ENCODE measurements at regions of chr16 and their contacts with region 1.

Region 1: GRCh38 chr16:9047686-9048301 is 43.6 kb upstream of the HAPSTR1 start:
- DNase-seq: peak; percentile 24
- ATAC-seq: peak; percentile 80
- H3K4me3 Mint-ChIP-seq: no peak overlapping the region
- H3K27ac Mint-ChIP-seq: no peak overlapping the region; the same call in none of the 2 replicates
- H3K4me1 Mint-ChIP-seq: peaks cover 18% of the 10 kb centered on the region
- H3K27me3 Mint-ChIP-seq: no peaks in the 10 kb centered on the region
- CTCF ChIP-seq: no peak

Region 2: GRCh38 chr16:8740775-8741355 is 306.9 kb before region 1 on chr16:
- CTCF ChIA-PET with region 1: no interaction called
- POLR2A ChIA-PET with region 1: no interaction called
- DNase-seq: no peak
- ATAC-seq: no peak
- H3K4me3 Mint-ChIP-seq: no peak overlapping the region
- H3K27ac Mint-ChIP-seq: no peak overlapping the region
- H3K4me1 Mint-ChIP-seq: peaks cover 6% of the 10 kb centered on the region; the same call in 1 of the 2 replicates
- H3K27me3 Mint-ChIP-seq: peaks cover 5% of the 10 kb centered on the region
- CTCF ChIP-seq: no peak

Region 3: GRCh38 chr16:8963825-8964441 is 83.9 kb before region 1 on chr16 and contains the start of gene USP7:
- CTCF ChIA-PET with region 1: interaction called, 10 read pairs
- POLR2A ChIA-PET with region 1: interaction called, 3 read pairs
- DNase-seq: peak; percentile 89
- ATAC-seq: peak; percentile 73
- H3K4me3 Mint-ChIP-seq: peak within 1 kb of the TSS; percentile 90
- H3K27ac Mint-ChIP-seq: 0 out of 2 replicates have a peak within 1 kb of the TSS, but pooled peaks have one; percentile 44
- H3K4me1 Mint-ChIP-seq: peaks cover 59% of the 10 kb centered on the region
- H3K27me3 Mint-ChIP-seq: peaks cover 9% of the 10 kb centered on the region
- CTCF ChIP-seq: no peak
- total RNA-seq, gene USP7: 153 to 211 TPM (median 161 TPM) in 3 replicates

Region 4: GRCh38 chr16:9061358-9061813 is 13.6 kb after region 1 on chr16:
- CTCF ChIA-PET with region 1: interaction called, 11 read pairs
- POLR2A ChIA-PET with region 1: no interaction called
- DNase-seq: no peak
- ATAC-seq: no peak
- H3K4me3 Mint-ChIP-seq: no peak overlapping the region
- H3K27ac Mint-ChIP-seq: peak overlapping the region; percentile 55; the same call in 1 of the 2 replicates
- H3K4me1 Mint-ChIP-seq: no peaks in the 10 kb centered on the region
- H3K27me3 Mint-ChIP-seq: no peaks in the 10 kb centered on the region
- CTCF ChIP-seq: no peak

Region 5: DNA sequence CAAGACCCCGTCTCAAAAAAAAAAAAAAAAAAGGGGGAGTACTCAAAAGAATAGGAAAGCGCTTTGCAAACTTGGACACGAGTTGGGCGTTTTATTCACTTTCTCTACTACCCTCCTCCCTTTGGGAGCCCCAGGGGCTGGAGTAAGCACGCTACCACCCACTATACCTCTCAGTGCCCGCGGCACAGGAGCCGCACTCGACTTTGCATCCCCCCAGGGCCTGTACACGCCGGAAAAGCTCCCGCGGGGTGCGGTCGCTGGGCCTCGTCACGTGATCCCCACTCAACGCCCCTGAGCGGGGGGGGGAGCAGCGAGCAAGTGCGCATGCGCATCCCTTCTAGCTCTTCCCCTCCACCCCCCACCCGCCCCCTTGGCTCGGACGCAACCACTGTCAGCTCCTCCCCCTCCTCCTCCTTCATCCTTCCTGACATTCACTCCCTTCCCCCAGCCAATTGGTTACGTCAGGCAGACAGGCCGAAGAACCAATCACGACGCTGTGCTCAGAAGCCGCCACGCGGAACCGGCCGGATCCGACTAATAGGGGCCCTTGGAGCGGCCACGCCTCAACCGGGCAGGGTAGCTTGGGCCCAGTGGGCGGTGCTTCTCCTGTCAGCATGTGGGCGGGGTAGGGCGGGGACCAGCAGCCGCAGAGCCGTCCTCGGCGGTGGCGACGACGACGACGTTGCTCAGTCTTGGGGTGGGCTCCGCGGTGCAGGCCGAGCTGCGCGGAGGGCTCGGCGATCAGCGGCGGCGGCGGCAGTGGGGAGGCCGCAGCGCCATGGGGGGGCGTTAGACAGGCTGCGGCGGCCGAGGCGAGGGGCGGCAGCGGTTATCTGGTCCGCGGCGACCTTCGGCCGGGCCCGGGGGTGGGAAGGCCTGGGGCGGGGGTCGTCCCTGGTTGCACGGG is 43.4 kb after region 1 on chr16 and contains the start of gene HAPSTR1:
- CTCF ChIA-PET with region 1: interaction called, 21 read pairs
- POLR2A ChIA-PET with region 1: interaction called, 7 read pairs
- DNase-seq: peak; percentile 99
- ATAC-seq: peak; percentile 94
- H3K4me3 Mint-ChIP-seq: peak within 1 kb of the TSS; percentile 100
- H3K27ac Mint-ChIP-seq: peak within 1 kb of the TSS; percentile 92
- H3K4me1 Mint-ChIP-seq: peaks cover 35% of the 10 kb centered on the region
- H3K27me3 Mint-ChIP-seq: no peaks in the 10 kb centered on the region
- CTCF ChIP-seq: no peak
- total RNA-seq, gene HAPSTR1: 54.3 to 59.1 TPM (median 56.4 TPM) in 3 replicates